CD14-positive monocyte (primary cell): ENCODE measurements at regions of chr7 and their contacts with region 1.

Region 1: GRCh38 chr7:149125863-149126661 is at the start of gene ZNF425:
- DNase-seq: peak; percentile 84 to 87 (median 86)
- H3K4me3 ChIP-seq: peak within 1 kb of the TSS; percentile 74 to 98 (median 91)
- H3K4me3 Mint-ChIP-seq: peak within 1 kb of the TSS; percentile 100
- H3K27ac ChIP-seq: peak within 1 kb of the TSS; percentile 76 to 93
- H3K27ac Mint-ChIP-seq: peak within 1 kb of the TSS; percentile 92 to 98 (median 98)
- H3K4me1 ChIP-seq: peaks cover 14 to 19% of the 10 kb centered on the region in 2 donors
- H3K4me1 Mint-ChIP-seq: peaks cover 18% of the 10 kb centered on the region
- H3K27me3 ChIP-seq: no peaks in the 10 kb centered on the region
- H3K27me3 Mint-ChIP-seq: peaks cover 1 to 3% (median 3%) of the 10 kb centered on the region in 3 donors
- CTCF ChIP-seq: peak; percentile 96
- polyA plus RNA-seq, gene ZNF425: 0.15 to 0.17 TPM in 2 of 3 donors, not detected in the other

Region 2: GRCh38 chr7:149147072-149147751 is 21.1 kb after region 1 on chr7 and contains the start of gene ZNF398:
- intact Hi-C with region 1: loop called (anchors 1 to 2 kb)
- DNase-seq: peak; percentile 79 to 88 (median 82)
- H3K4me3 ChIP-seq: peak within 1 kb of the TSS; percentile 62 to 84 (median 82)
- H3K4me3 Mint-ChIP-seq: peak within 1 kb of the TSS; percentile 95 to 96
- H3K27ac ChIP-seq: peak within 1 kb of the TSS; percentile 62 to 86
- H3K27ac Mint-ChIP-seq: peak within 1 kb of the TSS; percentile 90 to 97 (median 93)
- H3K4me1 ChIP-seq: peaks cover 15 to 16% of the 10 kb centered on the region in 2 donors
- H3K4me1 Mint-ChIP-seq: peaks cover 26% of the 10 kb centered on the region
- H3K27me3 ChIP-seq: no peaks in the 10 kb centered on the region
- H3K27me3 Mint-ChIP-seq: no peaks in the 10 kb centered on the region
- CTCF ChIP-seq: peak; percentile 95
- polyA plus RNA-seq, gene ZNF398: 3.0 to 3.7 (median 3.1) TPM